Activated T-helper 1 cell treated with anti-CD3 and anti-CD28 coated beads, Interleukin-12 subunit alpha, Interleukin-12 subunit beta, Interleukin-2, Interleukin-4 antibody, amounts not matched to agents 30 ng/mL and 10 ng/mL and 1 ng/mL, durations not matched to agents 14 hours and 24 hours and 36 hours (primary cell): ENCODE measurements at regions of chr12 and their contacts with region 1.

Region 1: GRCh38 chr12:53508534-53509199 is 1.4 kb upstream of the NPFF start:
- DNase-seq: peak; percentile 79
- H3K4me3 Mint-ChIP-seq: no peak overlapping the region
- H3K27ac Mint-ChIP-seq: peak overlapping the region; percentile 25
- H3K4me1 Mint-ChIP-seq: peaks cover 20% of the 10 kb centered on the region
- H3K27me3 Mint-ChIP-seq: no peaks in the 10 kb centered on the region

Region 2: DNA sequence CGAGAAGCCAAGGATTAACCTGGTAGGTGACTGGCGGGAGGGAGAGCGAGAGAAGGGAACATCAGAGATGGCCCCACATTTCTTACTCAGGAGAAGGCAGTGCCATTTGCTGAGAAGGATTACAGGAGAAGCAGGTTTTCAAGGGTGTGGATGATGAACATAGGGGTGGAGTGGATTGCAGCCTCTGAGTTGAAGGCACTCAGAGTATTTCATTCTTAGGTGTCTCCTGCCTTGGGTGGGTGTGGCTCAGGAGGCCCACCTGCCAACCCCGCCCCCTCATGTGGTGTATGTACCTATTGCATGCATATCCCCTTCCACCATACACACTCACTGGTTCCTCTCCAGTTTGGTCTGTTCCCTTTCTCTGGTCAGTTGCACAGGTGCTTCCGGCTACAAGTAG is 234.2 kb before region 1 on chr12:
- intact Hi-C with region 1: no loop called
- DNase-seq: no peak
- H3K4me3 Mint-ChIP-seq: no peak overlapping the region
- H3K27ac Mint-ChIP-seq: no peak overlapping the region
- H3K4me1 Mint-ChIP-seq: peaks cover 24% of the 10 kb centered on the region
- H3K27me3 Mint-ChIP-seq: no peaks in the 10 kb centered on the region

Region 3: GRCh38 chr12:53352331-53353256 is 156.1 kb before region 1 on chr12:
- intact Hi-C with region 1: loop called (anchors 1 kb)
- DNase-seq: peak; percentile 78
- H3K4me3 Mint-ChIP-seq: no peak overlapping the region
- H3K27ac Mint-ChIP-seq: peak overlapping the region; percentile 47
- H3K4me1 Mint-ChIP-seq: peaks cover 10% of the 10 kb centered on the region
- H3K27me3 Mint-ChIP-seq: no peaks in the 10 kb centered on the region

Region 4: DNA sequence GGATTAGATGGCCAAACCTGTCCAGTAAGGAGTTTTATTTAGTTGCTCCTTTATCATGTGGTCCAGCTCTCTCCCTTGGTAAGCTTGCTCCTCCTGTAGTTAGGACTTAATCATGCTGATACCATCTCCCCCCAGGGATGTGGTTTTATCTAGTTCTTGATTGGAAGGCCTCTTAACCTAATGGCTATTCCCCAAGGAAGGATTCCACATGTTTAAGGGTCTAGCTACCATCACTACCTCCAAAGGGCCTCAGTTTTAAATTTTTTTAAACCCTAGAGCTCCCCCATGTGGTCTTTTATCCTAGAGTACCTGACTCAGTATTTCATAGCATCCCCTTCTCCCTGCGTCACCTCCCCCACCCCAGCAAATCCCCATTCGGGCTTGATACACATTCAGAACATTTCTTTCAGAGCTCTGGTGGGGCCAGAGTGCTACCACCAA is 31.9 kb before region 1 on chr12:
- intact Hi-C with region 1: loop called (anchors 2 kb)
- DNase-seq: no peak
- H3K4me3 Mint-ChIP-seq: no peak overlapping the region
- H3K27ac Mint-ChIP-seq: peak overlapping the region; percentile 42
- H3K4me1 Mint-ChIP-seq: peaks cover 23% of the 10 kb centered on the region
- H3K27me3 Mint-ChIP-seq: no peaks in the 10 kb centered on the region

Region 5: GRCh38 chr12:53659011-53659551 is 150.4 kb after region 1 on chr12:
- intact Hi-C with region 1: no loop called
- DNase-seq: no peak
- H3K4me3 Mint-ChIP-seq: no peak overlapping the region
- H3K27ac Mint-ChIP-seq: no peak overlapping the region
- H3K4me1 Mint-ChIP-seq: no peaks in the 10 kb centered on the region
- H3K27me3 Mint-ChIP-seq: no peaks in the 10 kb centered on the region